ENCODE measurements at regions of chr6 and their contacts with region 1.

Region 1: DNA sequence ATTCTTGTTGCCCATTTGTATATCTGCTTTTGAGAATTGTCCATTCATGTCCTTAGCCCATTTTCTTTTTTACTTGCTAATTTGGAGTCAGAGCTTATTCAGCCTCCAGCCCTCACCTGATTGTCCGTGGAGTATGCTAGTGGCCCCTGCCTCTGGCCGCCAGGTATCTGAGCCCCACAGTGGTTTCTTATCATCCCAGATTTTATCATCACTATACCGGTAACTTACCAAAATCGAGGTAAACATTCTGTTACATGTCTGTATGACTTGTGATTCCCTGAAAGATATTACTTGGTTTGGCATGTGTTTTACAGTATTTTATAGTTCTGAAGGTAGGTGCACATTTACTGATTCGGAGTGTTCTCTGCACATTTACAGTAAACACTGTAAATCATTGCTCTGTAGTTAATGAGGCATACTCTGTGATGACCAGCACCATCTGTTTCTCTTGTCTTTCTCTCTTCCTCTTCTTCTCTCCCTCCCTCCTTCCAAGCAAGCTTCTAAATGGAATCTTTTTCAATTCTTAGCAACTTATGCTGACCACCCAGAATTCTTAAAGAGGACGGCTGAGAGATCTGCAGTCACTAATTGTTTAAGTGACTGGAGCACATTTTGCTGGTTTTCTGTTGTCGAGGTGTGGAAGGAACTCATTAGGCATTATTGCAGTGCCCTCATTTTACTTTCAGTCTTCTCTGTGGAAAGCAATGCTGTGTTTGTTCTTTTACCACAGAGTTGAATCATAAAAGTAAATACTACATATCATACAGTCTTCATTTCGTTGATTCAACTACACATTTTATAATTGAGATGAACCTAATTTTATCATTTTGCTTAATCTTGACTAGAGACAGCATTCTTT is 126.4 kb downstream of the UTRN start:
- DNase-seq: no peak
- H3K4me3 Mint-ChIP-seq: peak overlapping the region; percentile 62
- H3K27ac Mint-ChIP-seq: peak overlapping the region; percentile 57
- H3K4me1 Mint-ChIP-seq: peaks cover 54% of the 10 kb centered on the region
- H3K27me3 Mint-ChIP-seq: no peaks in the 10 kb centered on the region

Region 2: GRCh38 chr6:144395014-144395413 is 16.5 kb before region 1 on chr6:
- CTCF ChIA-PET with region 1: no interaction called
- POLR2A ChIA-PET with region 1: no interaction called
- intact Hi-C with region 1: loop called (anchors 1 kb)
- DNase-seq: no peak
- H3K4me3 Mint-ChIP-seq: no peak overlapping the region
- H3K27ac Mint-ChIP-seq: no peak overlapping the region
- H3K4me1 Mint-ChIP-seq: peaks cover 39% of the 10 kb centered on the region
- H3K27me3 Mint-ChIP-seq: no peaks in the 10 kb centered on the region